ENCODE measurements at regions of chr16 and their contacts with region 1.

Region 1: DNA sequence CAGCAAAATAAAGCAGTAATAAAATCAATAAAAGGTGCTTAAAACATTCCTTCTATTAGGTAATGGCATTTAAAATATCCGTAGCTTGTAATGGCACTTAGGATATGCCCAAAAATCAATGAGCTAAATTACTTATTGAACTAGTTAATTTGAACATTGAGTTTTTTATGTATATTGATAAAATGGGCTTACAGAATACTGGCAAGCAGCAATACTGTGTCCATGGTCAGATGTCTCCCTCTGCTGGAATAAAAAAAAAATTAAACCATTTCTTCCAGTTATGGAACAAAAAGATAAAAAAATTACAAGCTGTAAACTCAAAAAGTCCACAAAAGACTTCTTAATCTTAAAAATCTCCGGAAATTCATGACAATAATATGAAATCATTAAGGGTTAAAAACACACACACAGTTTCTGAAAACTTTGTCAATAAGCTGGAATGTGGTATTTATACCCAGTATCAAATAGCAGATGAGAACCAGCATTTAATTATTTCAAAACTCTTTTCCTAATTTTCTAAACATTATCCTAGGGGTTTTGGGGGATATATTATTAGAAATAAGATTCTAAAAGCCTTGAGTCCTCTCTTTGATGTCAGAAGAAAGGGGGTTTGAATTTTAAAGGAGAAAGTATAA is 21.5 kb upstream of the PSMD7 start:
- DNase-seq: no peak
- H3K4me3 Mint-ChIP-seq: no peak overlapping the region
- H3K27ac Mint-ChIP-seq: no peak overlapping the region
- H3K4me1 Mint-ChIP-seq: no peaks in the 10 kb centered on the region
- H3K27me3 Mint-ChIP-seq: peaks cover 5% of the 10 kb centered on the region

Region 2: DNA sequence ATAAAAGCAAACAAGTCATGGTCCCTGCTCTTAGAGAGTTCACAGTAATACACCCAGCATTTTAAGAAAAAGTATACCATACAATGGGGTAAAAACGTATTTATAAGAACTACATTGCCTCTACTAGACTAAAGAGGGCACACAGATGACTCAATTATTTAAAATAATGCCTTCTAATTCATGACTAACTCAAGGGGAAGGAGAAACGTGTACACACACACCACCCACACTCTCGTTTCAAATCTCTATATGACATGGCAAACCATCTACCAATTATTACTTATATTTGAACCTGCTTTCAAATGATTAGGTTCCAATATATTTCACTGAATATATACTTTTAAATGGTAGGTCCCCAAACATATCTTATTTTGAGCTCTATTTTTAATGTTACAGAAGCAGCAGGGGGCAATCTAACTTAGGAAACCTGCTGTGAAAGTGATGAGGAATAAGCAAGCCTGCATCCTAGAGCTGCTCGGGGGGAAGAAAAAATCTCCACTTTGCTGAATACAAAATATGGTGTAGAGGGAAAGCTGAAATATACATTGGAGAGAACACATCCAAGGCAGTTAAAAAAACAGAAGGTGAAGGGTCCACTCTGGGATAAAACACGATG is 210.9 kb before region 1 on chr16:
- CTCF ChIA-PET with region 1: no interaction called
- intact Hi-C with region 1: loop called (anchors 5 kb)
- DNase-seq: no peak
- H3K4me3 Mint-ChIP-seq: no peak overlapping the region
- H3K27ac Mint-ChIP-seq: no peak overlapping the region
- H3K4me1 Mint-ChIP-seq: no peaks in the 10 kb centered on the region
- H3K27me3 Mint-ChIP-seq: peaks cover 5% of the 10 kb centered on the region

Region 3: DNA sequence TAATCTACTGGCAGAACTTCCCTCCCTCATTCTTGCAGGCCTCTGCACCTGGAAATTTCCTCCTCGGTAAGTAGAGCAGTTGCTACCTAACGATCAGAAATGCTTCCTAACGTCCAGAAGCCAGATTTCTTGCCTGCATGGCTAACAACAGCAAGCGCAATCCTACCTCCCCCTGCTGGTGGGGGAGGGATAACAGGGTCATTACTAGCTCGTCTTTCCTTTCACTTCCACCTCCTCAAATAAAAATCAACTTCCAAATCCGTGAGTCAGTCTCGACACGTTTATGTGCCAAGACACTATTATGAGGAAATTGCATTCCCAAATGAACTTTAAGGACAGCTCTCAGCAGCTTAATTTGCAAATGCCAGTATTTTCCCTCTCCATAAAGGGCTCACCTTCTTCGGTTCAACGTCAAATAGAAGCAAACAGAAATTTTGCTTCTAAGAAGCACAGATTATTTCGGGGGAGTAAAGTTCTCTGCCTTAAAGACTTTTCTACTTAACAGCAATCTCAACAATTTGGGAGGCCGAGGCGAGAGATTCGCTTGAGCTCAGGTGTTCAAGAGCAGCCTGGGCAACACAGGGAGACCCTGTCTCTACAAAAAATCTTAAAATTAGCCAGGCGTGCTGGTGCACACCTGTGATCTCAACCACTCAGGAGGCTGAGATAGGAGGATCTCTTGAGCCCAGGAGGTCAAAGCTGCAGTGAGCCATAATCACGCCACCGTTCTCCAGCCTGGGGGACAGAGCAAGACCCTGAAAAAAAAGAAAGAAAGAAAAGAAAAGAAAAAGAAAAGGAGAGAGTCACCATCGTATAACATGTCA is 167.1 kb before region 1 on chr16:
- CTCF ChIA-PET with region 1: interaction called, 9 read pairs
- intact Hi-C with region 1: loop called (anchors 10 kb)
- DNase-seq: peak; percentile 53
- H3K4me3 Mint-ChIP-seq: peak overlapping the region; percentile 22
- H3K27ac Mint-ChIP-seq: no peak overlapping the region
- H3K4me1 Mint-ChIP-seq: peaks cover 3% of the 10 kb centered on the region
- H3K27me3 Mint-ChIP-seq: no peaks in the 10 kb centered on the region

Region 4: GRCh38 chr16:74438492-74439041 is 163.4 kb after region 1 on chr16:
- CTCF ChIA-PET with region 1: no interaction called
- intact Hi-C with region 1: no loop called
- DNase-seq: no peak
- H3K4me3 Mint-ChIP-seq: no peak overlapping the region
- H3K27ac Mint-ChIP-seq: no peak overlapping the region
- H3K4me1 Mint-ChIP-seq: peaks cover 9% of the 10 kb centered on the region
- H3K27me3 Mint-ChIP-seq: no peaks in the 10 kb centered on the region

Measured in activated naive CD4-positive, alpha-beta T cell treated with anti-CD3 and anti-CD28 coated beads for 36 hours (primary cell).